Prostate gland (tissue), 2 donors: ENCODE measurements at regions of chr17 and their contacts with region 1.

Region 1: DNA sequence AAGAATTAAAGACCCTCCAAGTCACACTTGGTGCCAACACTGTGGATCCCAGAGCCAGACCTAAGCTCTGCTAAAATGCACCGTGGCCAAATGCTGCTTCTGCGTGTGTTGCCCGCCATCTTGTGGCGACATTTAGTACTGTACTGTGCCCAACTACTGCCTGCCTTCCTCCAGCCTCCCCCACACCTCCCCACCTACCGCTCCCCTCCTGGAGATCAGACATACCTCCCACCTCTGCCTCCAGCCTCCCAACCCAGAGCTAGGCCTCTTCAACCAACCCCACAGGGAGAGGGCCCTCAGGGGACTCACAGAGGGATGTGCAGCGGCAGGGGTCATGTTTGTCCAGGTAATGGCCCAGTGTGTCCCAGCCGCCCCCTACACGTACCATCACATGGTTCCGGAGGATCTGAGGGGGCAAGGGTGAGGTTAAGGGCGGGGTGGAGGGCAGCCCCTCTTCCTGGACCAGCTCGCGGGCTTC is 5.5 kb downstream of the GAS2L2 start:
- DNase-seq: peak; percentile 74
- H3K4me3 ChIP-seq: no peak overlapping the region
- H3K27ac ChIP-seq: no peak overlapping the region
- H3K4me1 ChIP-seq: no peaks in the 10 kb centered on the region
- H3K27me3 ChIP-seq: peaks cover 10% of the 10 kb centered on the region
- CTCF ChIP-seq: peak; percentile 74 to 94 (median 90)
- POLR2A ChIP-seq: no peak

Region 2: DNA sequence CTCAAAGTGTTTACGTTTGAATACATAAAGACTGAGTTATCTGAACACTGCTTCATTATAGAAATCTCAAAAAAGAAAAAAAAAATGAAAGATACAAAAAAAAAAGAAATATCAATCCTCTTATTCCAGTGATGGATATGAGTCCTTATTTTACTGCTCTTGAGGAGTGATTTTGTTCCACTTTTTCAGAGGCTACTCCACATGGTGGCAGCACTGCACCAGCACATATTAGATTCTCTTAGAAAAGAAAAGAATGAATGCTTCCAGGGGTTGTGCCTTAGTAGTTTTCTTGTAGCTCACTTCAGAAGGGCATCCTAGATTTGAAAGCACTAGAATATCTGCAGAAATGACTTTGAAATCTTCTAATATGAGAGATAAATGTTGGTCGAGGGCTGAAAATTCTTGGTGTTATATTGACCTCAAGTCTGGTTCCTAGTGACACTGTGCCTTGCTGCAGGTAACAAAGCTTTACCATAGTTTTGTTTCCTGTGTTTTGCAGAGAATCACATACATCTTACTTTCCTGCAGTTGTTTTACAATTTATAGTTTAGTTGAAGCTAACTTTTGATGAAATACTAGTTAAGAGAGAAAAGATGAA is 134.6 kb before region 1 on chr17:
- intact Hi-C with region 1: loop called (anchors 2 kb)
- DNase-seq: peak; percentile 26
- H3K4me3 ChIP-seq: no peak overlapping the region
- H3K27ac ChIP-seq: no peak overlapping the region
- H3K4me1 ChIP-seq: no peaks in the 10 kb centered on the region
- H3K27me3 ChIP-seq: no peaks in the 10 kb centered on the region
- CTCF ChIP-seq: peak; percentile 16 to 63 (median 48)
- POLR2A ChIP-seq: no peak

Region 3: GRCh38 chr17:35808962-35809854 is 61.6 kb after region 1 on chr17 and contains the start of gene TAF15:
- intact Hi-C with region 1: no loop called
- DNase-seq: peak; percentile 97
- H3K4me3 ChIP-seq: peak within 1 kb of the TSS; percentile 76 to 90
- H3K27ac ChIP-seq: peak within 1 kb of the TSS; percentile 93 to 95
- H3K4me1 ChIP-seq: peaks cover 4% of the 10 kb centered on the region
- H3K27me3 ChIP-seq: no peaks in the 10 kb centered on the region
- CTCF ChIP-seq: peak in 3 of 4 experiments; percentile 68 to 83 (median 78)
- POLR2A ChIP-seq: peak; percentile 99
- total RNA-seq, gene TAF15: 57.2 to 86.1 TPM